B cell (primary cell): ENCODE measurements at regions of chr1 and their contacts with region 1.

Region 1: DNA sequence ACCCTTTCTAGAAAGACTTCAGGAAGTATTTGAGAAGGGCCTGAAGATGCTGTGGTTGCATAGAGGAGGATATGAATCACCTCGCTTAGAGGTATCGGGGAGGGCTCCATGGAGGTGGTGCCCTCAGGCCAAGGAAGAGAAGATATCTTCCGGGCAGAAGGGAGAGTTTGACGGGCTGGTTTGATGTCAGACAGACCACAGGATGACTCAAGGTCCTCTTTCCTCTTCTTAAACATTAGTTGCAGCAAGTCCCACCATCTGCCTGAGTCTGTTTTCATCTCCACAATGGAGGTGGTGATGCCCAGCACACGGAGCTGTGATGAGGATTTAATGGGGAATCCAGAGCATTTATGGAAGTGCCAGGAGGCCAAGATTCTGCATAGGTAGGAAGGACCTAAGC is 25.1 kb upstream of the RUNX3 start:
- DNase-seq: no peak
- ATAC-seq: peak; percentile 67
- H3K4me3 ChIP-seq: no peak overlapping the region
- H3K4me3 Mint-ChIP-seq: peak overlapping the region; percentile 72
- H3K27ac ChIP-seq: no peak overlapping the region
- H3K27ac Mint-ChIP-seq: peak overlapping the region; percentile 76
- H3K4me1 ChIP-seq: peaks cover 48 to 76% of the 10 kb centered on the region in 2 donors
- H3K4me1 Mint-ChIP-seq: peaks cover 70% of the 10 kb centered on the region
- H3K27me3 ChIP-seq: no peaks in the 10 kb centered on the region
- H3K27me3 Mint-ChIP-seq: no peaks in the 10 kb centered on the region
- CTCF ChIP-seq: no peak

Region 2: GRCh38 chr1:24847995-24848881 is 106.9 kb before region 1 on chr1:
- CTCF ChIA-PET with region 1: interaction called, 20 read pairs
- POLR2A ChIA-PET with region 1: no interaction called
- intact Hi-C with region 1: loop called (anchors 5 kb)
- DNase-seq: peak; percentile 95
- ATAC-seq: peak; percentile 94
- H3K4me3 ChIP-seq: peak overlapping the region in 4 of 5 experiments; percentile 54 to 66 (median 64)
- H3K4me3 Mint-ChIP-seq: peak overlapping the region; percentile 80
- H3K27ac ChIP-seq: peak overlapping the region; percentile 68 to 83
- H3K27ac Mint-ChIP-seq: peak overlapping the region; percentile 78
- H3K4me1 ChIP-seq: peaks cover 4 to 13% of the 10 kb centered on the region in 2 donors
- H3K4me1 Mint-ChIP-seq: peaks cover 12% of the 10 kb centered on the region
- H3K27me3 ChIP-seq: no peaks in the 10 kb centered on the region
- H3K27me3 Mint-ChIP-seq: no peaks in the 10 kb centered on the region
- CTCF ChIP-seq: peak; percentile 94

Region 3: GRCh38 chr1:24917327-24918074 is 37.7 kb before region 1 on chr1:
- CTCF ChIA-PET with region 1: no interaction called
- POLR2A ChIA-PET with region 1: no interaction called
- intact Hi-C with region 1: no loop called
- DNase-seq: no peak
- ATAC-seq: no peak
- H3K4me3 ChIP-seq: no peak overlapping the region
- H3K4me3 Mint-ChIP-seq: no peak overlapping the region
- H3K27ac ChIP-seq: no peak overlapping the region
- H3K27ac Mint-ChIP-seq: no peak overlapping the region
- H3K4me1 ChIP-seq: peaks cover 16 to 41% of the 10 kb centered on the region in 2 donors
- H3K4me1 Mint-ChIP-seq: peaks cover 55% of the 10 kb centered on the region
- H3K27me3 ChIP-seq: no peaks in the 10 kb centered on the region
- H3K27me3 Mint-ChIP-seq: no peaks in the 10 kb centered on the region
- CTCF ChIP-seq: no peak

Region 4: DNA sequence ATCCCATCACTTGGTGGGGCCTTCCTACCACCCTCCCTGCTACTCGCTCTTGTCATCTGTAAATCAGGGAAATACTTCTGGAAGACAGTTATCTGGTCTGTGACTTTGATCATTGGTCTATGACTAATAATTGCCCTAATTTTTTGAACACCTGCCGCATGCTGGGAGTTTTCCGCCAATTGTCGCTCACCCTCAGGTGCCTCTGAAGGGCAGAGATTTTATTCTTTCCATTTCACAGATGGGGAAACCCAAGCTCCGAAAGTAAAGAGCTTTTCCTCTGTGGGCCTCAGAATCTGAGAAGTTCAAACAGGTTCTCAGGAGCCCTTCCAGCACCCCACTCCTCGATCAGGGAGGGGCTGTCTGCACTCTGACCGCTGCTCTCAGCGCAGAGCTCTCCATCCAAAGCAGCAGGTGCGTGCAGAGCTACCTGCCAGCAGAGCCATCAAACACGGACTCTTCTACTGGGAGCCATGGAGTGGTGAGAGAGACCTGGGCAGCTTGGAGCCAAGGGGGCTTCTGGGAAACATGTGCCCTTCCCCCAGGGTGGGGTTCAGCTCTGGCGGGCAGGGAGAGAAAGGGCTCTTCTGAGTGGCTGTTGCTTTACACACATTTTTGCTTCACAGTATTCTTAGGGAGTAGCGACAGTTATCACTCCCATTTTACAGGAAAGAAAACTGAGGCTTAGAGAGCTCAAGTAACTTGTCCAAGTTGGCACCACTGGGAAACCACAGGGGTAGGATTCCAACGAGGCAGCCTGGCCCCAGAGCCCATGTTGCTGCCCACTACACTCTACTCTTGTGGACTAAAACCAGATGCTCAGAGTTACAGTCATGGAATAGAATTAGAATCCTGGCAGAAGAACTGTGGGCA is 19.3 kb before region 1 on chr1:
- CTCF ChIA-PET with region 1: interaction called, 30 read pairs
- POLR2A ChIA-PET with region 1: interaction called, 5 read pairs
- intact Hi-C with region 1: loop called (anchors 2 kb)
- DNase-seq: peak; percentile 26
- ATAC-seq: no peak
- H3K4me3 ChIP-seq: no peak overlapping the region
- H3K4me3 Mint-ChIP-seq: peak overlapping the region; percentile 66
- H3K27ac ChIP-seq: no peak overlapping the region
- H3K27ac Mint-ChIP-seq: peak overlapping the region; percentile 70
- H3K4me1 ChIP-seq: peaks cover 36 to 50% of the 10 kb centered on the region in 2 donors
- H3K4me1 Mint-ChIP-seq: peaks cover 43% of the 10 kb centered on the region
- H3K27me3 ChIP-seq: no peaks in the 10 kb centered on the region
- H3K27me3 Mint-ChIP-seq: no peaks in the 10 kb centered on the region
- CTCF ChIP-seq: no peak

Region 5: DNA sequence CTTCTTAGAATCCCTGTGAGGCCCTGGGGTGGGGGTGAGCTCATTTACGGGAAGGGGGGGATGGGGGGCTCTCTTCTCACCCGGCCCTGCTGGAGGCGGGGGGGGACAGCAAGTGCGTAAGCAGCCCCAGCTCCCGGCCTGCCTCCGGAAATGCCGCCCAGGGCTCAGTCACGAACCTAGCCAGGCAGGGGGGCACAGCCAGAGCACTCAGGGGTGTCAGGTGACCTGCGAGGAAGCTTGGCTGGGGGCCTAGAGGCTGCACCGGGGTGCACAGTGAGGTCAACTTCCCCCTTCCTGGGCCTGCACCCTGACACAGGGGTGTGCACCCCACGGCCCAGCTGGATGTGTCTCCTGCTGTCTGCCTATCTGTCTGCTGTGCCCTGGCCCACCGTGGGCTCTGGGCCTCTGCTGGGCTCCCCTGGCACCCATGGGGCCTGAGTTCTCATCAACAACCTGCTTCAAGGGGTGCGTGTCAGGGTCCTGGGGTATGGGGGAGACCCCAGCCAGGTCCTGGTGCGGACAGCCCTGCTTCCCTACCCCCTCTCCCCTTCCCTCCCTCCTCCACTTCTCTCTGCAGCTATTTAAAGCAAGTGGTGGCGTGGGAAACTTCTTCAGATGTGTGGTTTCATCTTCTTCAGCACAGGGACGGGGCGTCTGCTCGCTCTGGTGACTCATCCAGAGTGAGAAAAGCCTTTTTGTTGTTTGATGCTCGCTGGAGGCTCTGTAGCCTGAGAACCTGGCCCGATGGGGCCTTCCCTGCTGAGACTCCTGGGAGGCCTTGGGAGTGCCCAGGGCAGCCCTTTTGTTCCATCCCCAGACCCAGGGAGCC is 67.4 kb after region 1 on chr1:
- CTCF ChIA-PET with region 1: interaction called, 9 read pairs
- POLR2A ChIA-PET with region 1: interaction called, 5 read pairs
- intact Hi-C with region 1: loop called (anchors 2 kb)
- DNase-seq: peak; percentile 98
- ATAC-seq: peak; percentile 78
- H3K4me3 ChIP-seq: peak overlapping the region in 4 of 5 experiments; percentile 2 to 32 (median 23)
- H3K4me3 Mint-ChIP-seq: peak overlapping the region; percentile 78
- H3K27ac ChIP-seq: peak overlapping the region; percentile 97
- H3K27ac Mint-ChIP-seq: peak overlapping the region; percentile 94
- H3K4me1 ChIP-seq: peaks cover 49 to 67% of the 10 kb centered on the region in 2 donors
- H3K4me1 Mint-ChIP-seq: peaks cover 65% of the 10 kb centered on the region
- H3K27me3 ChIP-seq: no peaks in the 10 kb centered on the region
- H3K27me3 Mint-ChIP-seq: no peaks in the 10 kb centered on the region
- CTCF ChIP-seq: no peak

Region 6: GRCh38 chr1:25031966-25032667 is 77.0 kb after region 1 on chr1:
- CTCF ChIA-PET with region 1: interaction called, 131 read pairs
- POLR2A ChIA-PET with region 1: interaction called, 4 read pairs
- intact Hi-C with region 1: no loop called
- DNase-seq: peak; percentile 92
- ATAC-seq: peak; percentile 68
- H3K4me3 ChIP-seq: peak overlapping the region in 1 of 5 experiments; percentile 29
- H3K4me3 Mint-ChIP-seq: peak overlapping the region; percentile 89
- H3K27ac ChIP-seq: peak overlapping the region; percentile 82 to 89
- H3K27ac Mint-ChIP-seq: peak overlapping the region; percentile 98
- H3K4me1 ChIP-seq: peaks cover 77 to 92% of the 10 kb centered on the region in 2 donors
- H3K4me1 Mint-ChIP-seq: peaks cover 79% of the 10 kb centered on the region
- H3K27me3 ChIP-seq: no peaks in the 10 kb centered on the region
- H3K27me3 Mint-ChIP-seq: no peaks in the 10 kb centered on the region
- CTCF ChIP-seq: peak; percentile 38

Region 7: DNA sequence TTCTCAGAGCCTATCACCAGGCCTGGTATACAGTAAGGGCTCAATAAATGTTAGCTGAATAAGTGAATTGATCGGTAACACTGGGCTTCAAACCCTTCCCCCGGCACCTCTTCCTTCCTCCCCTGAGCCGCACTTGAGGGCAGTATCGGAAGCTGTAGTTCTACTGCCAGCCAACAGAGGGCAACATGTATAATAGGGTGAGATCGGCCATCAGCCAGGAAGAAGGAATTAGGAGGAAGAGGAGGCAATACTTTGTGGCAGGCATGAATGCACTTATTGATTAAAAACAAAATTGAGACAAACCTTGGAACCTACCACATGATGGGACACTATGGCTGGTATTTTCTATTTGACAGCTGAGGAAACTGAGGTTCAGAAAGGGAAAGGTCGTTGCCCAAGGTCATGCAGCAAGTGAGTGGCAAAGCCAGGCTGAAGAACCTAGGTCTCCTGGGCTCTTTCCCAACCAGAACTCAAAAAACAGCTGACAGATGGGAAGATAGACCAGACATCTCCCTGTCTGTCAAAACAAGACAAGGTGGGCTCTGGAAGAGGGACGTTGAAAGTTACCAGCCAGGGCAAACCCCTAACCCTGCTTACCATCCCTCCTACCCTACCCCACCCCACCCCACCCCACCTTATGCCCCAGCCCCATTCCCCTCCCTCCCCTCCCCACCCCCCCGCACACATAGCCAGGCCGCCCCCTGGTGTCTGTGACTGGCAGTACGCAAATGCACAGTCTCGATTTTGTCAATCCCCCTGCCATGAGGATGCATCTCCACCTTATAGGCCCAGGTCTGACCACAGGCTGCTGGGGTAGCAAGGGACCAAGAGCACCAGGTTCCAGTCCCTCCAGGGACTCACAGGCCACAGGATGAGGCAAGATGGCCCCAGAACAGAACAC is 82.3 kb after region 1 on chr1:
- CTCF ChIA-PET with region 1: interaction called, 131 read pairs
- POLR2A ChIA-PET with region 1: no interaction called
- intact Hi-C with region 1: no loop called
- DNase-seq: peak; percentile 74
- ATAC-seq: peak; percentile 65
- H3K4me3 ChIP-seq: no peak overlapping the region
- H3K4me3 Mint-ChIP-seq: peak overlapping the region; percentile 0
- H3K27ac ChIP-seq: no peak overlapping the region
- H3K27ac Mint-ChIP-seq: peak overlapping the region; percentile 63
- H3K4me1 ChIP-seq: peaks cover 36 to 49% of the 10 kb centered on the region in 2 donors
- H3K4me1 Mint-ChIP-seq: peaks cover 34% of the 10 kb centered on the region
- H3K27me3 ChIP-seq: peaks cover 0 to under 1% (median 0%) of the 10 kb centered on the region in 4 experiments
- H3K27me3 Mint-ChIP-seq: peaks cover 5% of the 10 kb centered on the region
- CTCF ChIP-seq: peak; percentile 71

Region 8: GRCh38 chr1:25541889-25542288 is 586.7 kb after region 1 on chr1:
- CTCF ChIA-PET with region 1: no interaction called
- POLR2A ChIA-PET with region 1: interaction called, 11 read pairs
- intact Hi-C with region 1: no loop called
- DNase-seq: no peak
- ATAC-seq: no peak
- H3K4me3 ChIP-seq: no peak overlapping the region
- H3K4me3 Mint-ChIP-seq: peak overlapping the region; percentile 63
- H3K27ac ChIP-seq: no peak overlapping the region
- H3K27ac Mint-ChIP-seq: peak overlapping the region; percentile 15
- H3K4me1 ChIP-seq: peaks cover 12 to 22% of the 10 kb centered on the region in 2 donors
- H3K4me1 Mint-ChIP-seq: peaks cover 17% of the 10 kb centered on the region
- H3K27me3 ChIP-seq: peaks cover 0 to 13% (median 3%) of the 10 kb centered on the region in 4 experiments
- H3K27me3 Mint-ChIP-seq: no peaks in the 10 kb centered on the region
- CTCF ChIP-seq: no peak